Left cardiac atrium (tissue), 4 donors: ENCODE measurements at regions of chr1 and their contacts with region 1.

Region 1: GRCh38 chr1:33610864-33611455 is 138.5 kb downstream of the ZSCAN20 start:
- DNase-seq: no peak
- ATAC-seq: peak in 1 of 2 donors; percentile 41

Region 2: DNA sequence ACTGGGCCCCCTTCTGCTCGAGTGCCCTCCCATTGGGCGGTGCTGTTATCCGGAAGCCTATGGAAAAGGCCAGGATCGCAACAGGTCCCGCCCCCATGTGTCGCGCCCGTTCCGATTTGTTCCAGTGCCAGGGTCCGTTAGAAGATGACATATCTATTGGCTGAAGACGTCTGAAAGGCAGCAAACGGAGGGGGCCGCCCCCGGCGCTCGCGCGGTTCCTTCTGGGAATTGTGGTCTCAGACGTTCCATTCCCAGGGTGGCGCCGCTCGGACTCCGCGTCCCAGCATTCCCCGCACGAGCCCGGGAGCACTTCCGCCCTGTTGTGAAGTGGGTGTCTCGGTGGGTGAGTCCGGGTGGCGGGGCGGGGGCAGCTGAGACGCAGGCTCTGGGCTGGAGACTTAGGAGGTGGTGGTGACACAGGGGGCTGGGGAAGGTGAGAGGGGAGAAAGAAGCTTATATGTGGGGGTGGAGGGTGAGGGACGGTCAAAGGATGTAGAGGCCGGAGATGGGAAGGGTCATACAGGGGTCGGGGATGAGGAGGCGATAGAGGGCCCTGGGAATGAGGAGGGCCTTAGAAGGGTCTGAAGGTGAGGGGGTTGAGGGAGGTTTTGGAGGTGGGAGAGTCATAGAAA is 138.5 kb before region 1 on chr1 and contains the start of gene ZSCAN20:
- intact Hi-C with region 1: loop called in 1 of 2 experiments (anchors 5 kb)
- DNase-seq: peak; percentile 99
- ATAC-seq: peak; percentile 92 to 94
- total RNA-seq, gene ZSCAN20: 4.4 to 5.2 TPM

Region 3: DNA sequence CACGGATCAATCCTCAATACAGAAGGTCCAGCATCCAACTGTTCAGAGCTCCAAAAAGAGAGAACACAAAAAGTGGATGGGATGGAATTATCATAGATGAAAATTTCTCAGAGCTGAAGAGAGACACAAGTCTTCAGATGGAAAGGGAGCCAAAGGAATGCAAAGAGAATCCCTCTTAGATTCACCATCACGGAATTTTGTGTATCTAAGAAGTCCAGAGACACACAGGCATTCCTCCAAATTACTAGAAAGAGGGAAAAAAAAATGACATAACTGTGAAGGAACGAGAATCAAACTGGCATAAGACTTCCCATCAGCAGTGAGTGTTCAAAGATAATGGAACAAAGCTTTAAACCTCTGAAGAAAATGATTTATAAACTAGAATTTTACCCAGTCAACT is 37.3 kb before region 1 on chr1:
- intact Hi-C with region 1: loop called in 1 of 2 experiments (anchors 5 kb)
- DNase-seq: no peak
- ATAC-seq: no peak

Region 4: DNA sequence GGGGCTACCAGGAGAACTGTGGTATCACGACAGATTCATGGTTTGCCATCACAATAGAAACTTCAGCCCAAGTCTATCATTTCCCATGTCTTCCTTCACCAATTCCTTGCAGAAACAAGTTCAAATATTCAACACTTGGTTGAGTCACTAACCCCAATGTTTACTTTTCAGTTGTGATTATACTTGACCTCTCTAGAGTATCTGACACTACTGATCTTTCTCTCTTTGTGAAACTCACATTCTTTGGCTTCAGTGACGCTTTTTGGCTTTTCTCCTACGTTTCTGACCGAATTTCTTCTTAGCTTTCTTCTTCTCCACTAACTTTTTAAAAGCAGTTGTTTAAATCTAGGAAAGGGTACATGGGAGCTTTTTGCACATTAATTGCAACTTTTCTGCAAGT is 204.1 kb after region 1 on chr1:
- intact Hi-C with region 1: no loop called
- DNase-seq: no peak
- ATAC-seq: no peak